Endothelial cell of umbilical vein (primary cell): ENCODE measurements at regions of chr14 and their contacts with region 1.

Region 1: DNA sequence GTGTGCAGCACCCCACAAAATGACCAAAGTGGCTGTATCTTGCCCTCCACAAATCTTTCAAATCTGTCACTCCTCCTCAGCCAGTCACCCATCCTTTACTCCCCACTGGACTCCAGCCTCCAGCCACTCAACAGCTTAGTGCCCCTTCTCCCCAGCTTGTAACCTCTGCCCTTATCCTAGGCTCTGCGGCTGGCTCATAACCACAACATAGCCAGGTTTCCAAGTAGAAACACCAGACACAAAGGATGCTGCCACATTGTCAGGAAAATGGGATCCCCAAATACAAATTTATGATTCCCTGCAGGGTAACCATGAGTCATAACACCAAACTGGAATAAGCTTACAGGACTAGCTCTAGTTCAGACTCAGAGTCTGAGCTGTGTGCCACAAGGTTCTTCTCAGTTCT is 15.1 kb downstream of the OXA1L start:
- DNase-seq: no peak
- H3K4me3 ChIP-seq: no peak overlapping the region
- H3K27ac ChIP-seq: no peak overlapping the region
- H3K4me1 ChIP-seq: peaks cover 2% of the 10 kb centered on the region
- H3K27me3 ChIP-seq: no peaks in the 10 kb centered on the region
- CTCF ChIP-seq: no peak
- POLR2A ChIP-seq: no peak

Region 2: DNA sequence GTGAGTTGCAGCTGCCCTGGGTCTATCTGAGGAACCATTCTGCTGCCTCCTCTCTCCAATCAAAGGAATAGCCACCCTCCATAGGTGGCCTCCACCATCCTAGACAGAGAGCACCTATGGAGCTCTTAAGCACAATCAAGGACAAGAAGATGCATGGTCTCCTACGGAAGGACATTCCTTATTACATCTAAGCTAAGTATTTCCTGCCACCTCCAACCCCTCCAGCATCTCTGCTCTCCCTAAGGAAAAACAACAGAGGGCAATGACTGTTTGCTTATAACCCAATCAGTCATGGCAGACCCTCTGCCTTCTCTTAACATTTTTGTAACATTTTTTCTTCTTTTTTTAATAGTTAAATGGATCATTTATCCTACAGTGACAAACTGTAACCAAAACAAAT is 122.6 kb before region 1 on chr14:
- CTCF ChIA-PET with region 1: interaction called, 15 read pairs
- POLR2A ChIA-PET with region 1: no interaction called
- dilution Hi-C with region 1: no loop called
- intact Hi-C with region 1: loop called (anchors 1 kb)
- DNase-seq: peak; percentile 42
- H3K4me3 ChIP-seq: peak overlapping the region in 1 of 3 experiments; percentile 28
- H3K27ac ChIP-seq: peak overlapping the region; percentile 72
- H3K4me1 ChIP-seq: peaks cover 32% of the 10 kb centered on the region
- H3K27me3 ChIP-seq: no peaks in the 10 kb centered on the region
- CTCF ChIP-seq: no peak
- POLR2A ChIP-seq: no peak